ENCODE measurements at regions of chr16 and their contacts with region 1.

Region 1: GRCh38 chr16:51359141-51359955 is 208.3 kb upstream of the SALL1 start:
- DNase-seq: no peak
- H3K4me3 ChIP-seq: no peak overlapping the region
- H3K27ac ChIP-seq: no peak overlapping the region
- H3K4me1 ChIP-seq: no peaks in the 10 kb centered on the region
- H3K27me3 ChIP-seq: no peaks in the 10 kb centered on the region
- CTCF ChIP-seq: no peak

Region 2: DNA sequence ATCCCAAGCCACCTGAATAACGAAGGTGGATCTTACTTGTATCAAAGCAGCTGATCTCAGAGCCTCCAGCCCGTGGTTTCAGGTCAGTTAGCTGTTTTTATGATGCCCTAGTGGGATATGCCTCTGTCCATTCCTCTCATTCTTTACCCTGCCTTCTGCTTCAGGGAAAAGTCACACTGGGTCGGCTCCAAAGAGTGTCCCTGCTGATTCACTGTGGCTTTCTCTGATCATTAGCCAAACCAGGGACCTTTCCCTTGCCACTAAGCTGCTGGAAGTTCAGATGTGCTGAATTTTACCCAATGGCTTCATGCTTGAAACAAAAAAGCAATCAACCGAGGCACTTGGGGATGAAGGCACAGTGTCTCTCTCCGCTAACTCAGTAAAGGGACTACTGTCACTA is 38.1 kb before region 1 on chr16:
- dilution Hi-C with region 1: loop called (anchors 5 kb)
- DNase-seq: no peak
- H3K4me3 ChIP-seq: no peak overlapping the region
- H3K27ac ChIP-seq: no peak overlapping the region
- H3K4me1 ChIP-seq: peaks cover under 1% of the 10 kb centered on the region
- H3K27me3 ChIP-seq: no peaks in the 10 kb centered on the region
- CTCF ChIP-seq: no peak

Region 3: GRCh38 chr16:51392521-51393187 is 33.3 kb after region 1 on chr16:
- dilution Hi-C with region 1: no loop called
- DNase-seq: no peak
- H3K4me3 ChIP-seq: no peak overlapping the region
- H3K27ac ChIP-seq: peak overlapping the region; percentile 16
- H3K4me1 ChIP-seq: no peaks in the 10 kb centered on the region
- H3K27me3 ChIP-seq: no peaks in the 10 kb centered on the region
- CTCF ChIP-seq: no peak